GM13976 (cell line): ENCODE measurements at regions of chr10 and their contacts with region 1.

Region 1: GRCh38 chr10:3239066-3239919 is 66.7 kb upstream of the PITRM1 start:
- DNase-seq: peak; percentile 84
- CTCF ChIP-seq: peak; percentile 91

Region 2: GRCh38 chr10:3353235-3353634 is 113.9 kb after region 1 on chr10:
- in situ Hi-C with region 1: no loop called
- DNase-seq: no peak
- CTCF ChIP-seq: no peak

Region 3: GRCh38 chr10:4663162-4663904 is 1424.0 kb after region 1 on chr10:
- in situ Hi-C with region 1: loop called (anchors 25 kb)
- DNase-seq: peak; percentile 15
- CTCF ChIP-seq: no peak

Region 4: DNA sequence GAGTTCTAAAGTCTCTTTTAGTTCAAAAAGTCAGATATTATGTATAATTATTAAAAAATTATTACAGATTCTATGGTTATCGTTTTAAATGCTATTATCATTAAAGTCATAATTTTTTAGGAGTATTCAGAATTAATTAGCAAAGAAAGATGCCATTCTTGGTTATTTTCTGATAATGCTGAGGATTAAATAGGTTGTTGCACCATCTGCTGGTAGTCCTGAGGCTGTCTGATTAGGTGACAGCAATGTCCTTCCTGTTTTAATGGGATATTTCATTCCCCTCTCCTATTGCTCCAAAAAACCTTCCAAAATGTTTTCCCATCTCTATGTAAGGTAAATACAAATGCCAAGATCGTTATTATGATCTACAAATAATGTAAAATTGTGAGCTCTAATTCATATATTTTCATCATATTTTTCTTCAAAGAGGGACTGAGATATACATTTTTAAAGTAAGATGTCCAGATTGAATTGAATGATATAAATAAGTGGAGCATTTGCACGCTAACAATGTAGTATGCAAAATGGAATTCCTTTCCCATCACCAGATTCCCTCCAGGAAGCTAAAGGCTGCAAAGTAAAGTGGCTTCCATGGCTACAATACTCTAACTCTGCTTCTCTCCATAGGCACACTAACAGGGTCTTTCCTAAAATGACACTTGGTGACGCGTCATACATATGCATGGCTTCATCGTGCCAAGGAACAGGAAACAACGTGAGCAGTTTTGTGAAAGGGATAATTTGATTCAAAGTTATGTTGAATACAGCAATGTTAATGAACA is 1527.9 kb after region 1 on chr10:
- in situ Hi-C with region 1: loop called (anchors 25 kb)
- DNase-seq: no peak
- CTCF ChIP-seq: peak; percentile 49